GM10248 (cell line): ENCODE measurements at regions of chr14 and their contacts with region 1.

Region 1: GRCh38 chr14:103520657-103521437 is 1.8 kb downstream of the CKB start:
- DNase-seq: peak; percentile 79
- CTCF ChIP-seq: peak; percentile 71

Region 2: GRCh38 chr14:103361868-103362267 is 159.0 kb before region 1 on chr14:
- CTCF ChIA-PET with region 1: no interaction called
- POLR2A ChIA-PET with region 1: no interaction called
- DNase-seq: no peak
- CTCF ChIP-seq: no peak

Region 3: DNA sequence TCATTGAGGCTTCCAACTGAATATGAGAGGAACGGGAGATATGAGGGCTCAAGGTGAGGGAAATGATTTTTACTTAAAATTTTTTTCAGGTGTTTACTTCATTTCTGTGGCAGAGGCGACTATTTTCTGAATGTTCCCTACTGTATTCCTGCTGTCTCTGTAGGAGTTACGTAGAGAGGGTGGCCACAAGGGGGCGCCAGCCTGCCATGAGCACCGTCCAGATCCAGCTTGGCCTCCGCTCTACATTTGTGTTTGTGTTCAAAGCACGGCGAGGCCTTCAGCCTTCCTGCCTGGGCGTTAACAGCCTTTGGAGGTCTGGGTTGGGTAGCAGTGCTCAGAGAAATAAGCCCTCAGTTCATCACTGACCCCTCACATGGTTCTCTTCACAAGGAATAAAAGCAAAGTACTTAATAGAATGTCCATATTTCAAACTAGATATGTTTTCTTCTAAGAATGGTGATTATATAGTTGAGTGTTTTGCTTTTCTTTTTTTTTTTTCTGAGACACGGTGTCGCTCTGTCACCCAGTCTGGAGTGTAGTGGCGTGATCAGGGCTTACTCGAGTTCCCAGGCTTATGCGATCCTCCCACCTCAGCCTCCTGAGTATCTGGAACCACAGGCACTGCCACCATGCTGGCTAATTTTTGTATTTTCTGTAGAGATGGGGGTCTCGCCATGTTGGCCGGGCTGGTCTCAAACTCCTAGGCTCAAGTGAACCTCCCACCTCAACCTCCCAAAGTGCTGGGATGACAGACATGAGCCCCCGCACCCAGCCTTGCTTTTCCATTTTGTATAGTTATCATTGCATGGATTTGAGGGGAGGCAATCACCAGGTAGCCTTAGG is 20.5 kb before region 1 on chr14:
- CTCF ChIA-PET with region 1: interaction called, 39 read pairs
- POLR2A ChIA-PET with region 1: no interaction called
- DNase-seq: peak; percentile 81
- CTCF ChIP-seq: peak; percentile 90

Region 4: GRCh38 chr14:103539056-103539825 is 18.4 kb after region 1 on chr14:
- CTCF ChIA-PET with region 1: interaction called, 214 read pairs
- POLR2A ChIA-PET with region 1: interaction called, 3 read pairs
- DNase-seq: no peak
- CTCF ChIP-seq: peak; percentile 5

Region 5: DNA sequence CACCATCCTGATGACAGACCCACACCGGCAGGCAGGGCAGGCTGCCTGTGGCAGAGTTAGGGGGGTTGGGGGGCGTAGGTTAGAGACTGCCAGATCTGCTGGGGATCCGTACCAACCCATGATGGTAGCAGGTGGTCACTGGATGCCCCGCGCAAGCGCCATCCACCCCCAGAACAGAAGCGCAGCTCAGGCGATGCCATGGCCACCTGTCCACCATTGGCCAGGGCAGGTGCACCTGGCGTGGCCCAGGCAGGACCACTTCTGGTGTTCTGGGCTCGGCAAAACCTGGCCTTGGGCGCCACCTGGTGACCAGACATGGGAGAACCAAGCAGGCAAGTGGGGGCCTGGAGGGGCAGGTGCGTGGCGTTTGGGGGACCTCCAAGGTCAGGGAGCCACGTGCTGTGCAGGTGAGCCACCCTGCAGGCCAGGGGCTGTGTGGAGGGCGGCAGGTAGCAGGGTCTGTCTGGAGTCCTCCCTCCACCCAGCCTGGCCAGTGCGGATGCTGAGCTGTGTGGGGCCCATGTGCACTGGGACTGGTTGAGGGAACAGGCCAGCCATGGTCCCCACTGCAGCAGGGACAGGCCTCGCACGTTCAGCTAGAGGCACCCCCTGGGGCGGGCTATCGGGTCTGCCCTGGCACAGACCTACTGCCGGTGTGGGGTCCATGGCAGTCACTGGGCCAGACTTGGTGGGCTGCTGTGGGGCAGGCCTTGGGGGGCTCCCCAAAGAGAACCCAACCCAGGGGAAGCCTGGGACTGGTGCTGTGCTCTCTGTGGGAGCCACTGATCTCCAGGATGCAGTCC is 26.0 kb after region 1 on chr14:
- CTCF ChIA-PET with region 1: interaction called, 214 read pairs
- POLR2A ChIA-PET with region 1: no interaction called
- DNase-seq: peak; percentile 91
- CTCF ChIP-seq: peak; percentile 94

Region 6: DNA sequence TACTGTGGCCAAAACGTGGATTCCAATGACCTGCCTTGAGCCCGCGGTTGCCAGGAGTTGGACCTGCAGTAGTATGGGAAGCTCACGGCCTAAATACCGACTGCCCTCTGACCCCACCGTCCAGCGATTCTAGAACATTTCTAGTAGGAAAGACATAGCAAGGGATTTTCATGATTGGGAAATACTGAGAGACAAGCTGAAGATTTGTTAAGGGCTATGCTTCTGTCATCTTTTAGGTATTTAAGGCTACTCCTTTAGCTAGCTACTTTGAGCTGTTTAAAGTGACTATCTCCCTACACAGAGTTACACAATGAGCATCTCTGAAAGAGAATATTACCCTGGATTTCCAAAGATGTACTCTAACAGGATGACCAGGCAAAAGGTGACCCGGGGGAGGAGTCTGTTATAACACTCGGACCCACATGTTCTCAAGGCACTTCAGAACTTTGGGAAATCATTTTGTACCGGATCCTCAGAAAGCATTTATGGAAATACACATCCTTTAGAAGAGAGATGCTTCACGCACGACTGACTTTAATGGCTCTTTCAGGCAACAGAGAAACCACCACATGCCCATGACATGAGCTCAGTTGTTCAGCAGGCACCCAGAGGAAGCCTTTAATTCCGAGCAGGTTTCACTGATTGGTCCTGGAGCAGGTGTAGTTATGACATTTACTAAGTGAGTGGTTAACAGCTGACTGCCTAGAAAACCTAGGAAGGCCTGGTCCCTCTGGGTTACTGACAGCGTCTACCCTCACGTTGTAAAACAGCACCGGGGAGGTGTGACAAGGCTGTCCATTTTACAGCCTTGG is 37.4 kb after region 1 on chr14:
- CTCF ChIA-PET with region 1: interaction called, 214 read pairs
- POLR2A ChIA-PET with region 1: no interaction called
- DNase-seq: no peak
- CTCF ChIP-seq: no peak